Gastrocnemius medialis (tissue), 4 donors: ENCODE measurements at regions of chr2 and their contacts with region 1.

Region 1: DNA sequence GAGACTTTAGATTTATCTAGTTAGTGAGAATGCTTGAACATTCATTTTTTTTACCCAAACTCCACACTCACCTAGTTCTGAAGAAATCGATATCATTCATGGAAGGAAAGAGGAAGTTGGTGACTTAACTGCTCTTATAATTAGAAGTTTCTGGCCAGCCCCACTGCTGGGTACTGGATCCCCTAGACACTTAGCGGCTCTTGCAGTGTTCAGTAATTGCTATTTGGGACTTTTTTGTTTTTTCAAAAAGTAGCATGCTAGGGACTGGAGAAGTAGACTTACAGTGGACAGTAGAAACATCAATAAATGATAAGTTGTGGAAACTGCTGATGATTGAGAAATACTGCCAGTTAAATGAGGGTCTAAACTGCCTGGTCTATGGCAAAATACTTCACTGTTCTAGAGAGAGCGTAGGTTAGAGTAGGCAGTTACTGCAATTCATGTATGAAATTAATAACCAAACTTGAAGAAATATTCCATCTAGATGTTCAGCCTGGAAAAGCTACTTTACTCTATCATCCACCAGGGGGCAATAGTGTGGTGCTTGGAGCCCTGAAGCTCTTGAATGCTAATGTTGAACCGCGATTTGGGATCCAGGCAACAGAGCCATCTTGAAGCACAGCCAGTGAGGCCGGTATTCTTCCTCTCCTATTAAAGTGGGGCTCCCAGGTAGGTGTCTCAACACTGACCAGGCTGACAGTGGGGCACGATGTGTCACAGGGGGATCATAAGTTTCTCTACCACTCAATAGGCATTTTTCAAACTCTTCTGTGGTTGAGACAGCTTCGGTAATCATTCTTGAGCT is 146.1 kb upstream of the SESTD1 start:
- DNase-seq: peak in 1 of 2 donors; percentile 27
- ATAC-seq: peak; percentile 19 to 78
- H3K4me3 ChIP-seq: no peak overlapping the region
- H3K27ac ChIP-seq: no peak overlapping the region
- H3K4me1 ChIP-seq: no peaks in the 10 kb centered on the region
- H3K27me3 ChIP-seq: no peaks in the 10 kb centered on the region
- CTCF ChIP-seq: peak; percentile 38 to 73 (median 51)
- POLR2A ChIP-seq: no peak

Region 2: DNA sequence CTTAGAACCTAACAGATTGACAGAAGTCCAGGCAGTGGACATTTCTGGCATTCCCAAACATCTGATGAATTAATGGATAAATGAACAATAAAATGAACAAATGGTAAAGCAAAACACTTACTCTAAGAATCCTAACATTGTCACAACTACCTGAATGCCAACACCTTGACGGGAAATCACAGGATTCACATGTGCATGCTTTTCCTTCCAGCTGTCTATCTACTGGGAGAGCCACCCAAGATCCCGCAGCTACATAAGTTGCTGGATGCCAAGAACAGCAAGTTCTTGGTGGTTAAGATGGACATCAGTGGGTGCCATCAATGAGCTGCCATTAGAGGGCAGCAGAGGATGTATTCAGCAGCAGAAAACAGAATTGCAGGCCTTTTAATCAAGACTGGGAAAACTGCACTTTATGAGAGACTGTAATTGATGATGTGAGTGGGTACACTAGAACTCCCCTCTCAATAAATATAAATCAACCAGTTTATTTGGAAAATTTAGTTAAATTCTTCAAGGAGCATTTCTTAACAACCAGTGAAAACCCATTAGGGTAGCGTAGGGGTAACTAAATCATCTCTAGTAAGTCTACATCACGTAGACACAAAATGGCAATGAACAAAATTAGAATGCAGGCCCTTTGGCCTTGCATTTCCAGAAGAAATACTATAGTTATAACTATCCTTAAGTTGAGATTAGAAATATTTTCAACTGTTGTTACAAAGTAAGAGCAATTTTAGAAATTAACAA is 191.7 kb before region 1 on chr2:
- in situ Hi-C with region 1: loop called in 1 of 4 experiments (anchors 25 kb)
- intact Hi-C with region 1: loop called (anchors 5 kb)
- DNase-seq: peak; percentile 53 to 74
- ATAC-seq: peak; percentile 97 to 98
- H3K4me3 ChIP-seq: no peak overlapping the region
- H3K27ac ChIP-seq: peak overlapping the region in 2 of 4 donors; percentile 5 to 17
- H3K4me1 ChIP-seq: peaks cover 5 to 12% of the 10 kb centered on the region in 2 donors
- H3K27me3 ChIP-seq: no peaks in the 10 kb centered on the region
- CTCF ChIP-seq: peak; percentile 65 to 88 (median 69)
- POLR2A ChIP-seq: no peak

Region 3: DNA sequence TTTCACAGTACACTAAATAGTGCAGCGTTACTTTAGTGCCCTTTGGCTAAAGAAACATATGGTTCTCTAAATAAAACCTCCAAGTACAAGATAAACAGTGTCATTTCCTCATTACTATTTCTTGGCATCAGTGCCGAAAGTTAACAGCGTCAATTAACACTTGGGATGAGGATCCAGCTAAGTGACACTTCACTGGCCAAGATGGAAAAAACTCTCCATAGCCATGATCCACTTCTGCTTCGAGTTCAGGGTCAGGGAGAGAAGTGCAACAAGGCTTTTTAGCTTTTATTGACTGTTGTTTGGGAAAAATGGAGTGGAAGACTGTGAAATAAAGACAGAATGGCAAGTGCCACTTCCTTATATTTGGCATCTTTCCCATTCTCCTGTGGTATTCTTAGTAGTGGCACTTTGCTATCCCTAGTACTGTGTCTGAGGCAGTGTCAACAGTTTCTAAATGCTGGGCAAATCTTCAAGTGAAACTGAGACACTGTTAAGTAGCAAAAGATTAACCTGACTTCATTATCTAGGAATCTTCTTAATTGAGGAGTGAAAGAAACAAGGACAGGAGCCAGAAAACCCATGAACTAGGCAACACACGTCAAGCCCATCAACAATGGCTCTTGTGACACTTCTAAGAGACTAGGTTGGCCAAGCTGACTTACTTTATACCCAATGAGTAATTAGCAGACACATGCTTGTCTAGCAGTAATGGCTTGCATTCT is 76.4 kb after region 1 on chr2:
- in situ Hi-C with region 1: no loop called
- intact Hi-C with region 1: no loop called
- DNase-seq: no peak
- ATAC-seq: peak; percentile 21 to 36
- H3K4me3 ChIP-seq: no peak overlapping the region
- H3K27ac ChIP-seq: no peak overlapping the region
- H3K4me1 ChIP-seq: peaks cover 0 to 3% of the 10 kb centered on the region in 2 donors
- H3K27me3 ChIP-seq: no peaks in the 10 kb centered on the region
- CTCF ChIP-seq: no peak
- POLR2A ChIP-seq: no peak